SK-MEL-5 (cell line): ENCODE measurements at regions of chr10 and their contacts with region 1.

Region 1: GRCh38 chr10:72483471-72483870 is 128.8 kb upstream of the DNAJB12 start:
- DNase-seq: peak; percentile 16

Region 2: DNA sequence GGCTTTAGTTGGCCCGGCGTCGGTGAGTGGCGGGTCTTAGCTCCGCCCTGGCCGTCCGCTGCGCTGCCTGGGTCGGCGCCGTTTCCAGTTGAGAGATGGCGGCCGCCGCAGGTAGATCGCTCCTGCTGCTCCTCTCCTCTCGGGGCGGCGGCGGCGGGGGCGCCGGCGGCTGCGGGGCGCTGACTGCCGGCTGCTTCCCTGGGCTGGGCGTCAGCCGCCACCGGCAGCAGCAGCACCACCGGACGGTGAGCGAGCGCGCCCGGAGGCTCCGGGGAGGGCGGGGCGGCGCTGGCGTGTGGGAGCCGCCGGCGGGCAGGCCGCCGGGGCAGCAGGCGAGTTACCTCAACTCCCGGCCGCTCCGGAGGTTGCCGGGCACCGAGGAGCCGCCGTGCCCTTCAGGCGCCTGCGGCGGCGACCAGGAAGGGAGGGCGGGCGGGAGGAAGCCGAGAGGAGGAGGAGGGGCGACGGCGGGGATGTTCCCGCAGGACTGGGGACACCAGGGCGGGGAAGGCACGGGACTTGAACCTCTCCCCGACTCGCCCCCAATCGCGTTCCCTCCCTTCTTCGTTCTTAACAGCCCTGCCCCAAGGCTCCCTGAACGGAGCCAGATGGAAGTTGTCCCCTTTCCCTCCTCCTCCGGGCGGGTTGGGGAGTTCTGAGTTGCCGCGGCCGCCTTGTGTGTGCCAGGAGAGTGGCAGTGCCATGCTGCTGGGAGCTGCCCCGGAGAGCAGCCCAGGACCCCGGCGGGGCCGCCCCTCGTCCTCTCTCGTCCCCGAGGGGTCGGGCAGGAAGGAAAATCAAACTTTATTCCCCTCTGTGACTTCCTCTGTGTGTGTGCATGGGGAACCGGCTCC is 208.8 kb after region 1 on chr10 and contains the start of gene MCU:
- in situ Hi-C with region 1: loop called (anchors 25 kb)
- DNase-seq: peak; percentile 21
- total RNA-seq, gene MCU: 7.9 and 11.1 TPM in 2 replicates